ENCODE measurements at regions of chr18 and their contacts with region 1.

Region 1: GRCh38 chr18:70431203-70431624 is 142.4 kb downstream of the SOCS6 start:
- DNase-seq: no peak
- ATAC-seq: no peak
- H3K4me3 ChIP-seq: no peak overlapping the region
- H3K27ac ChIP-seq: no peak overlapping the region
- H3K4me1 ChIP-seq: no peaks in the 10 kb centered on the region
- H3K27me3 ChIP-seq: no peaks in the 10 kb centered on the region
- CTCF ChIP-seq: no peak

Region 2: GRCh38 chr18:69680123-69680522 is 751.1 kb before region 1 on chr18:
- intact Hi-C with region 1: loop called in 1 of 10 experiments (anchors 5 kb)
- DNase-seq: no peak
- ATAC-seq: peak in 2 of 8 donors; percentile 21 to 57
- H3K4me3 ChIP-seq: no peak overlapping the region
- H3K27ac ChIP-seq: no peak overlapping the region
- H3K4me1 ChIP-seq: peaks cover 0 to 4% (median 0%) of the 10 kb centered on the region in 9 donors
- H3K27me3 ChIP-seq: no peaks in the 10 kb centered on the region
- CTCF ChIP-seq: no peak

Region 3: GRCh38 chr18:70195852-70196434 is 235.3 kb before region 1 on chr18:
- intact Hi-C with region 1: loop called (anchors 1 to 5 kb)
- DNase-seq: peak in 1 of 2 donors; percentile 26
- ATAC-seq: peak in 6 of 8 donors; percentile 47 to 81 (median 75)
- H3K4me3 ChIP-seq: no peak overlapping the region
- H3K27ac ChIP-seq: peak overlapping the region in 5 of 10 donors; percentile 13 to 52 (median 22)
- H3K4me1 ChIP-seq: peaks cover 0 to 7% (median 0%) of the 10 kb centered on the region in 9 donors
- H3K27me3 ChIP-seq: no peaks in the 10 kb centered on the region
- CTCF ChIP-seq: peak; percentile 64 to 87 (median 77)

Region 4: DNA sequence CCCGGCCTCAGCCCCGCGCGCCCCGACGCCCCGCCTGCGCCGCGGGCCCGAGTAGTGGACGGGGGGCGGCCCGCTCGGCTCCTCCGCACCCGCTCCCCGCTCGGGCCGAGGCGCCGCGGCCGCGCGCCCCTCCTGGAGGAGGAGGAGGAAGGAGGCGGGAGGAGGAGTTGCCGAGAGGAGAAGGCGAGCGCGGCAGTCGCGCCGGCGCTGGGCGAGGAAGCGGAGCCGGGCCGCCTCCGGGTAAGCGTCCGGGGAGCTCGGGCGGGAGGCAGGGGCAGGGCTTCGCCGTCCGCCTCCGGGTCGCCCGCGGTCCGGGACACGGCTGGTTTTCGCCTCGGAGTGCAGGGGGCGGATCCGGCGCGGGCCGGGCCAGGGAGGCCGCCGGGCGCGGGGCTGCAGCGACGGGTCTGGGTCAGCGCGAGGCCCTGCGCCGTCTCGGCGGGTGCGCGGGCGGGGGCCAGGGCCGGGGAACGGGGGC is 142.3 kb before region 1 on chr18 and contains the start of gene SOCS6:
- intact Hi-C with region 1: loop called in 7 of 10 experiments (anchors 5 to 10 kb)
- DNase-seq: peak; percentile 59 to 77
- ATAC-seq: peak; percentile 30 to 82 (median 64)
- H3K4me3 ChIP-seq: peak within 1 kb of the TSS; percentile 57 to 95 (median 73)
- H3K27ac ChIP-seq: peak within 1 kb of the TSS; percentile 82 to 94 (median 90)
- H3K4me1 ChIP-seq: peaks cover 5 to 68% (median 39%) of the 10 kb centered on the region in 9 donors
- H3K27me3 ChIP-seq: no peaks in the 10 kb centered on the region
- CTCF ChIP-seq: no peak
- total RNA-seq, gene SOCS6: 17.0 to 31.8 (median 21.2) TPM

Region 5: GRCh38 chr18:70578480-70578879 is 147.3 kb after region 1 on chr18:
- intact Hi-C with region 1: no loop called
- DNase-seq: no peak
- ATAC-seq: no peak
- H3K4me3 ChIP-seq: no peak overlapping the region
- H3K27ac ChIP-seq: no peak overlapping the region
- H3K4me1 ChIP-seq: no peaks in the 10 kb centered on the region
- H3K27me3 ChIP-seq: no peaks in the 10 kb centered on the region
- CTCF ChIP-seq: no peak

Measured in heart right ventricle (tissue), 16 donors.